ENCODE measurements at regions of chr5 and their contacts with region 1.

Region 1: GRCh38 chr5:149852641-149853330 is 91.8 kb downstream of the PDE6A start:
- DNase-seq: peak; percentile 58
- ATAC-seq: peak; percentile 61
- H3K4me3 Mint-ChIP-seq: no peak overlapping the region
- H3K27ac Mint-ChIP-seq: no peak overlapping the region
- H3K4me1 Mint-ChIP-seq: no peaks in the 10 kb centered on the region
- H3K27me3 Mint-ChIP-seq: no peaks in the 10 kb centered on the region

Region 2: DNA sequence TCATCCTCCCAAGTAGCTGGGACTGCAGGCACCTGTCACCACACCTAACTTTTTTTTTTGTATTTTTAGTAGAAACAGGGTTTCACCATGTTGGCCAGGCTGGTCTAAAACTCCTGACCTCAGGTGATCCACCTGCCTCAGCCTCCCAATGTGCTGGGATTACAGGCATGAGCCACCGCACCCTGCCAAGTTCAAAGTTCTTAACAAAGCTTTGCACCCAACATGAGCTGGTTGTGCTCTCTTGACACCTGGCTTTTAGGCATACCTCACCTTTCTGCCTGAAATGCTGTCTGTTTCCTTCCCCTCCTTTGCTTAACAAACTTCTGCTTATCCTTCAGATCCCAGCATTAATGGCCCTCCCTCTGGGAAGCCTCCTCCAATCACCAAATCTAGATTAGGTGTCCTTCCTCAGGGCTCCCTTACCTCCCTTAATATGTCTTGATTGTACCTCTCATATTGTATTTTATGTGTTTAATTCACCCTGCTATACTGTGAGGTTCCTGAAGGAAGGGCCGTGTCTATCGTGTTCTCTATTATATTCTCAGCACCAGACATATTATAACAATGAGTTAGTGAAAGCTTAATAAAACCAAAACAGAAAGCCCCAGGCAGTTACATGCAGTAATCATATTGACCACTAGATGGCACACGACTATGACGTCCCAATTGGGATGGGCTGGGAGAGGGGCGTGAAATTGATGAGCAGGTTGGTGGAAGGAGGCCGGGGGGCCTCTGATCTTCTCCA is 185.5 kb before region 1 on chr5:
- CTCF ChIA-PET with region 1: interaction called, 14 read pairs
- DNase-seq: peak; percentile 41
- ATAC-seq: peak; percentile 36
- H3K4me3 Mint-ChIP-seq: no peak overlapping the region
- H3K27ac Mint-ChIP-seq: no peak overlapping the region
- H3K4me1 Mint-ChIP-seq: peaks cover 2% of the 10 kb centered on the region
- H3K27me3 Mint-ChIP-seq: peaks cover 7% of the 10 kb centered on the region

Region 3: GRCh38 chr5:149759986-149760853 is 92.6 kb before region 1 on chr5:
- CTCF ChIA-PET with region 1: no interaction called
- DNase-seq: no peak
- ATAC-seq: no peak
- H3K4me3 Mint-ChIP-seq: no peak overlapping the region
- H3K27ac Mint-ChIP-seq: no peak overlapping the region
- H3K4me1 Mint-ChIP-seq: peaks cover 5% of the 10 kb centered on the region
- H3K27me3 Mint-ChIP-seq: no peaks in the 10 kb centered on the region

Region 4: GRCh38 chr5:149782018-149782894 is 70.5 kb before region 1 on chr5:
- CTCF ChIA-PET with region 1: no interaction called
- DNase-seq: no peak
- ATAC-seq: no peak
- H3K4me3 Mint-ChIP-seq: no peak overlapping the region
- H3K27ac Mint-ChIP-seq: no peak overlapping the region
- H3K4me1 Mint-ChIP-seq: peaks cover 10% of the 10 kb centered on the region
- H3K27me3 Mint-ChIP-seq: no peaks in the 10 kb centered on the region

Region 5: DNA sequence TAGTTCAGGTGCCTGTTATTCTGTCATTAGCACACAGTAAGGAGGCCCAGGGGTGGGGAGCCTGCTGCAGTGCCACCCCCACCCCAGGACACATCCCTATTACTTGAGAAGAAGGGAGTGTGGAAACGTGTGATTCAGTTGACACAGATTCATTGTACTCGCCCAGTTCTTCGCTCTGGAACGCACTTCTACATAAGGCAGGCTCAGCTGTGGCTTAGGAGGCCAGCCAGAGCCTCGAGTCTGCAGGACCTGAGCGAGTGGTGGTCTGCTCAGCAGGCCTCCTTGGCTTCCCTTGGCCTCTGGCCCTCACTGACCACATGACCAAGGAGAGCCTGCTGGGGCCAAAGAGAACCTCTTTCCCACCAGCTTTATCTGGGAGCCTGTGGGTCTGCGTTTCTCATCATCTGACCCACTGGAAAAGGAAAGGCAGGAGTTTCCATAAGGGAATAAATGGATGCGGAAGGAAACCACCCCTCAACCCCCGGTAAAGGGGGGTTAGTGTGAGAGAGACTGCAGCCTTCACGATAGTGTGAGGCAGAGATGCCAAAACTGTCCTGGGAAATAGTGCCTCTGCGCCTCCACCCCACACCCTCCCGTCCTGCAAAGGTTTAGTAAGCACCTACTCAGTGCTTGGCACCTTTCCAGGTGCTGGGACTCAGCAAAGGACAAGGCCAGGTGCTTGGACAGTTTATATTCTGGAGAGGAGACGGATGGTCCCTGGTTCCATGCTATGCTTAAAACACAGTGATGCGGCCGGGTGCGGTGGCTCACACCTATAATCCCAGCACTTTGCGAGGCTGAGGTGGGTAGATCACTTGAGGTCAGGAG is 48.9 kb before region 1 on chr5:
- CTCF ChIA-PET with region 1: no interaction called
- DNase-seq: no peak
- ATAC-seq: no peak
- H3K4me3 Mint-ChIP-seq: no peak overlapping the region
- H3K27ac Mint-ChIP-seq: no peak overlapping the region
- H3K4me1 Mint-ChIP-seq: no peaks in the 10 kb centered on the region
- H3K27me3 Mint-ChIP-seq: no peaks in the 10 kb centered on the region

Region 6: DNA sequence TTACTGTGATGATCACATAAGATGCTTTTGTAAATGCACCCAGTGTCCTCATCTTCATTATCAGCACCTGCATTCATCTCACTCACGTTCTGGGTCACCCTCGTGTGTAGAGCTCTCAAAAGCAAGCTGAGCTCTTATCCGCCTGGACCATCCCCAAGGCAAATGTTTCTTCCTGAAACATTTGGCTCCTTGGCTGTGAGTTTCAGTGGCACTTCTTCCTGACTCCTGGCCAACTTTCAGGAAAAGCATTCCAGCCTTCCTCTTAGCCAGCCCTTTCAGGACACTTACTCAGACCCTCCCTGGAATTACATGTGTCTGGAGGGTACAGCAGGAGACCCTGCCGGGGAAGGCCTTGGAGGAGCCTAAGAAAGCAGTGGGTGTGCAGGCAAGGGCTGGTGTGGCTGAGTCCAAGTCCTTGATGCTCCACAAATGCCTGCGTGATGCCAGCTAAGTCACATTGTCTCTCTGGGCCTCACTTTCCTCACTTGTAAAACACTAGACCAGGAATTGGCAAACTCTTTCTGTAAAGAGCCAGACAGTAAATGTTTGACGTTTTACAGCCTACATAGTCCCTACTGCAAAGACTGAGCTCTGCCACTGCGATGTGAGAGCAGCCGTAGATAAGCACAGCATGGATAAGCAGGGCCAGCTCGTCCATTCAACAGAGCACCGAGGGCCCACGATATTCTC is 19.7 kb after region 1 on chr5:
- CTCF ChIA-PET with region 1: interaction called, 14 read pairs
- DNase-seq: no peak
- ATAC-seq: no peak
- H3K4me3 Mint-ChIP-seq: no peak overlapping the region
- H3K27ac Mint-ChIP-seq: no peak overlapping the region
- H3K4me1 Mint-ChIP-seq: peaks cover 4% of the 10 kb centered on the region
- H3K27me3 Mint-ChIP-seq: peaks cover 7% of the 10 kb centered on the region

Region 7: GRCh38 chr5:149960272-149961185 is 107.7 kb after region 1 on chr5 and contains the start of gene SLC26A2:
- CTCF ChIA-PET with region 1: interaction called, 30 read pairs
- DNase-seq: peak; percentile 98
- ATAC-seq: peak; percentile 99
- H3K4me3 Mint-ChIP-seq: peak within 1 kb of the TSS; percentile 85
- H3K27ac Mint-ChIP-seq: peak within 1 kb of the TSS; percentile 94
- H3K4me1 Mint-ChIP-seq: peaks cover 31% of the 10 kb centered on the region
- H3K27me3 Mint-ChIP-seq: no peaks in the 10 kb centered on the region
- total RNA-seq, gene SLC26A2: 6.2 to 8.4 TPM